Activated naive CD4-positive, alpha-beta T cell treated with anti-CD3 and anti-CD28 coated beads for 36 hours (primary cell): ENCODE measurements at regions of chr7 and their contacts with region 1.

Region 1: DNA sequence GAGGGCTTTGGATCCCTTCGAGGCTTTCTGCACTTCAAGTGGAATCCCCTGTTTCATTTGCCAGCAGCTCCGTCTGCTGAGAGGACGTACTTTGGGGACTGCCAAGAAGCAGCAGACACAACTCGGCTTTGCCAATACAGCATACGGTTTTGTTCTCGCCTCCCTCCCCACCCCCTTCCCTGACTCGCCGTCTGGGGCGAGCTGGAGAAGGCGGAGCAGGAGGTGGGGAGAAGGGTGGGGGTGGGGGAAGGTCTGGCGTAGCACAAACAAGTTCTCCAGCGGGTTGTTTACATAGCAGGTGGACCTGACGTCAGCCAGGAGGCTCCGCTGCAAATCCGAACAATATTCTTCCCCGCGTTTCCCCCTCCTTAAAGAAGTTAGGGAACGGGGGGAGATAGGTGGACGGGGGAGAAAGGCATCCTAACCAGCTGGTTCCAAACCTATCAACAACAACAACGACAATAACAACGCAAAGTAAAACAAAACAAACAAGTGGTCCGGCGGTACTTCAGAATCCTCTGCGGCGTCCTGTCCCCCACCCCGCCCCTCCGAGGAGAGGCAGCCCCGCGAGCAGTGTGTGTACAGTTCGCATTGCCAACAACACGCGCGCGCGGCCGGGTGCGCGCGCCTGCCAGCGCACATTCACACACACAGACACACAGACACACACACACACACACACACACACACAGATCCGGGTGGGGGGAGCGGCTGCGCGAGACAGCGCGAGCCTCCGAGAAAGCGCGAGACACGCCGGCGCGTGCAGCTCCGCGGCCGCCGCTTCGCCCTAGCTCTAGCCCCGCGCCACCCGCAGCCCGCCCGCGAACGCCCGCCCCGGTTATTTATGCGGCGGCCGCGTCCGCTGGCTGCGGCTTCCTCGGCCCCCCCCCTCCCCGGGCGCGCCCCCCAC is 167.0 kb upstream of the PPP1R3A start:
- DNase-seq: peak; percentile 40
- H3K4me3 Mint-ChIP-seq: peak overlapping the region; percentile 76
- H3K27ac Mint-ChIP-seq: no peak overlapping the region
- H3K4me1 Mint-ChIP-seq: peaks cover 40% of the 10 kb centered on the region
- H3K27me3 Mint-ChIP-seq: peaks cover 64% of the 10 kb centered on the region

Region 2: DNA sequence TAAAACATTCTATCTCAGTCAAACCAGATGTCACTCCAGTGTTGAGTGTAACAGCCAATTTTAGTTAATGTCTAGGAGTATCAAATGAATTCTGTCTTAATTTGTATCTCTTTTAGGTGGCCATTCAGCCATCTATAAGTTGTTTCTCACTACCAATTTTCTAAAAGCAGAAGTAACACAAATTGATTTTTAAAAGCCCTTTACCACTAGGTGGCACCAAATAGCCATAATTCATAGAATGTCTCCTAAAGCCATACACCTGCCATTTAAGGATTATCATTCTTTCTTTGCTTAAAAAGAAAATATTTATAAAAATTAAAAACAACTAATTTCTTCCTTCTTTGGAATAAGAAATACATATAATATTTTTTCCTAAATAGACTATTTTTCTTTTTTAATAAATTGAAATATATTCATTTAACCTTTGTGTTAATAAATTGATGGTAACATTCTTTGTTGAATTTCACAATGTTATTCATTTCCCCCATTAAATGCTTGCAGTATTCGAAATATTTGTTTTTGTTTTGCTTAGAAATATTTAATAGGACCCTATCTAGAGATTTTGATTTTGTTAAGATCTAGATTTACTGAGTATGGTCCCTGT is 59.3 kb before region 1 on chr7:
- CTCF ChIA-PET with region 1: interaction called, 3 read pairs
- intact Hi-C with region 1: loop called (anchors 2 kb)
- DNase-seq: no peak
- H3K4me3 Mint-ChIP-seq: no peak overlapping the region
- H3K27ac Mint-ChIP-seq: no peak overlapping the region
- H3K4me1 Mint-ChIP-seq: no peaks in the 10 kb centered on the region
- H3K27me3 Mint-ChIP-seq: peaks cover 2% of the 10 kb centered on the region

Region 3: GRCh38 chr7:114183311-114184088 is 97.7 kb after region 1 on chr7:
- CTCF ChIA-PET with region 1: no interaction called
- intact Hi-C with region 1: no loop called
- DNase-seq: no peak
- H3K4me3 Mint-ChIP-seq: no peak overlapping the region
- H3K27ac Mint-ChIP-seq: no peak overlapping the region
- H3K4me1 Mint-ChIP-seq: no peaks in the 10 kb centered on the region
- H3K27me3 Mint-ChIP-seq: no peaks in the 10 kb centered on the region

Region 4: DNA sequence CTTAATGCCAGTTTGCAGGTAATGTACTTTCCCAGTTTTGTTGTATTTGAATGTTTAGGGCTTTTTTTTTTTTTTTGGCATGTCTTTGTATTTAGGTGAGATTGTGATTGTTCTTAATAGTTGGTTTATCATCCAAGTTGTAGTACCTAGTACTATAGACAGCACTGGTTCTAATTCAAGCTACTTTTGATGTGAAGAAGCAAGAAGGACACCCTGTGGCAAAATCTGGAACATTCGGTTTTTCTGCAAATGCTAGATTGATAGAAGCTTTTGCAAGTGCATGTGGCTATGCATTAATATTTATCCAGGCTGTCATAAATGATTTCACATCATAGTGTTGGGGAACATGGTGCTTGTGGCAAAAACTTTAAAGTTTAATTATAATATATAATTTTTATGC is 577.7 kb after region 1 on chr7:
- CTCF ChIA-PET with region 1: no interaction called
- intact Hi-C with region 1: loop called (anchors 10 kb)
- DNase-seq: peak; percentile 7
- H3K4me3 Mint-ChIP-seq: no peak overlapping the region
- H3K27ac Mint-ChIP-seq: no peak overlapping the region
- H3K4me1 Mint-ChIP-seq: no peaks in the 10 kb centered on the region
- H3K27me3 Mint-ChIP-seq: peaks cover 6% of the 10 kb centered on the region

Region 5: GRCh38 chr7:114930829-114931655 is 845.2 kb after region 1 on chr7:
- CTCF ChIA-PET with region 1: no interaction called
- intact Hi-C with region 1: loop called (anchors 5 kb)
- DNase-seq: no peak
- H3K4me3 Mint-ChIP-seq: peak overlapping the region; percentile 63
- H3K27ac Mint-ChIP-seq: no peak overlapping the region
- H3K4me1 Mint-ChIP-seq: peaks cover 58% of the 10 kb centered on the region
- H3K27me3 Mint-ChIP-seq: no peaks in the 10 kb centered on the region

Region 6: GRCh38 chr7:115475761-115476385 is 1390.0 kb after region 1 on chr7:
- CTCF ChIA-PET with region 1: no interaction called
- intact Hi-C with region 1: loop called (anchors 5 kb)
- DNase-seq: peak; percentile 26
- H3K4me3 Mint-ChIP-seq: no peak overlapping the region
- H3K27ac Mint-ChIP-seq: no peak overlapping the region
- H3K4me1 Mint-ChIP-seq: peaks cover 6% of the 10 kb centered on the region
- H3K27me3 Mint-ChIP-seq: peaks cover 26% of the 10 kb centered on the region

Region 7: DNA sequence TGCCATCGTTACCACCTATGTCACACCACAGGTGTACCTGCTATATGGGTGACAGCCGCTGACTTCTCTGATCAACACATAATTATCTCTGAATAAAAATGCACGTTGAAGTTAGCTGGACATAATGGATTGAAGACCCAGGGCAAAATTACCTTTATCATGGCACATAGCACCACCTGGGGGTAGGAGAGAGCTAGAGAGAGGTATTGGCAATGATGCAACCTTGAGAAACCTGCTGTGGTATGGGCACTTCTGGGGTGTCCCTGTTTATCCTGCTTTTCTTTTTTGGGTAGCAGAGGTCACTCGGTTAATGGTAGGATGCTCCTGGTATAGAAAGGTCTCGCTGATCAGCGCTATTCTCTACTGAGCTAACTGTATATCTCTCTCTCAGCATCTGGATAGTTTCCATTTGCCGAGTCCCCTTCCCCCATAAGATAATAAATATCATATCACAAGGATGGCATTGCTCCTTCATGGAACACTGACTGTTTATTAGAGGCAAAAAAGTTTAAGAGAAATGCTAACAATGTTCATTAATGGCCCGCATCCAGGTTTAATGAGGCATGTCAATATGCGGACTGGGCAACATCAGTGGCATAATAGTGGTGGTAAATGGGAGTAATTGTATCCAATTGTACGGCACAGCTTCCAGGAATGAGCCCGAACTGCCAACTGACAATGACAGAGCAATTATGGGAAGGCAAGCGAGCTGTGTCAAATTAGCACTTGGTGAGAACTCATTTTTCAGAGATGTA is 1621.6 kb after region 1 on chr7:
- CTCF ChIA-PET with region 1: no interaction called
- intact Hi-C with region 1: loop called (anchors 2 kb)
- DNase-seq: peak; percentile 22
- H3K4me3 Mint-ChIP-seq: no peak overlapping the region
- H3K27ac Mint-ChIP-seq: no peak overlapping the region
- H3K4me1 Mint-ChIP-seq: no peaks in the 10 kb centered on the region
- H3K27me3 Mint-ChIP-seq: no peaks in the 10 kb centered on the region

Region 8: GRCh38 chr7:115910541-115911164 is 1824.8 kb after region 1 on chr7:
- CTCF ChIA-PET with region 1: no interaction called
- intact Hi-C with region 1: loop called (anchors 1 kb)
- DNase-seq: no peak
- H3K4me3 Mint-ChIP-seq: no peak overlapping the region
- H3K27ac Mint-ChIP-seq: no peak overlapping the region
- H3K4me1 Mint-ChIP-seq: no peaks in the 10 kb centered on the region
- H3K27me3 Mint-ChIP-seq: peaks cover 8% of the 10 kb centered on the region